Sciatic nerve (tissue), 2 donors: ENCODE measurements at regions of chr22 and their contacts with region 1.

Region 1: GRCh38 chr22:18968011-18968749 is 32.1 kb upstream of the PRODH start:
- DNase-seq: no peak
- ATAC-seq: peak; percentile 20

Region 2: GRCh38 chr22:18905540-18906409 is 62.4 kb before region 1 on chr22 and contains the start of gene DGCR6:
- intact Hi-C with region 1: no loop called
- DNase-seq: no peak
- ATAC-seq: peak; percentile 98
- total RNA-seq, gene DGCR6: 2.8 TPM

Region 3: DNA sequence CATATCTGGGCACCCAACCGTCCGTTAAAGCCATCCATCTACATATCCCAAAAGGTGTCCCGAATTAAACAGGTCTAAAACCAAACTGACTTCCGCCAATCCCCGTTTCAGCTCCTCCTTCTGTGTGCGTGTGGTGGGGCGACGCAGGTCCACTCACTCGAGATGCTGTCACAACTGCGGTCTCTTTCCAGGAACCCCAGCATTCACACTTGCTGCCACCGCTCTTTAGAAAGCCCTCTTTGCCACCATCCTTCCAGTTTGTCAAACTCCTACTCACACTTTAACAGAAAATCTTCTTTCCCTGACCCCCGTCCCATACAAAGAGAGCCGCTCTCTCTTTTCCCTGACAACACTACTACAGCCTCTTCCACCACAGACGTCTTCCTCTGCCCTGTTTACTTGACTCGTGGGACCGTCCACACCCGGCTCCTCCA is 175.8 kb after region 1 on chr22:
- intact Hi-C with region 1: no loop called
- DNase-seq: no peak
- ATAC-seq: no peak

Region 4: DNA sequence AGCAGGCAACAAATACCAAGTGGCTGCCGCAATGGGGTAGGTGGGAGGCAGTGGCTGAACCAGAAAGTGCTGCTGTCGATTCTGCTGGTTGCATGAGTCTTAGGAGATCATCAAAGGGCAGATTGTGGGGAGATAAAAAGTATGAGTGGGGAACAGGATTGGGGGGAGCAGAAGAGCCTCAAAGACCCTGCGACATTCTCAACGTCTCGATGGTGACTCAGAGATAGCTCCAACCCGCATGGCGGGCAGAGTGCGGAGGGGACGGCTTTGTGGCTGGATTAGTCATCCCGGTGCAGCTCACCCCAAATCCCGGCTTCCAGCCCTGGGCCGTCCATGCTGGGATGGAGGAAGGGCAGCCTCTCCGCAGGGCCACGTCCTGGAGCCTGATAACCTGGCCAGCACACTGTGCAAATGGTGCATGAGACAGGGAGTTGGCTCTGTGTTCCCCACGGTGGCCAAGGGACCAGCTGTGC is 1311.5 kb after region 1 on chr22:
- intact Hi-C with region 1: loop called (anchors 10 kb)
- DNase-seq: no peak
- ATAC-seq: no peak